ENCODE measurements at regions of chr1 and their contacts with region 1.

Region 1: GRCh38 chr1:192573499-192573898 is 2.1 kb upstream of the RGS1 start:
- DNase-seq: no peak
- H3K4me3 Mint-ChIP-seq: no peak overlapping the region
- H3K27ac Mint-ChIP-seq: no peak overlapping the region
- H3K4me1 Mint-ChIP-seq: peaks cover 79% of the 10 kb centered on the region
- H3K27me3 Mint-ChIP-seq: no peaks in the 10 kb centered on the region

Region 2: DNA sequence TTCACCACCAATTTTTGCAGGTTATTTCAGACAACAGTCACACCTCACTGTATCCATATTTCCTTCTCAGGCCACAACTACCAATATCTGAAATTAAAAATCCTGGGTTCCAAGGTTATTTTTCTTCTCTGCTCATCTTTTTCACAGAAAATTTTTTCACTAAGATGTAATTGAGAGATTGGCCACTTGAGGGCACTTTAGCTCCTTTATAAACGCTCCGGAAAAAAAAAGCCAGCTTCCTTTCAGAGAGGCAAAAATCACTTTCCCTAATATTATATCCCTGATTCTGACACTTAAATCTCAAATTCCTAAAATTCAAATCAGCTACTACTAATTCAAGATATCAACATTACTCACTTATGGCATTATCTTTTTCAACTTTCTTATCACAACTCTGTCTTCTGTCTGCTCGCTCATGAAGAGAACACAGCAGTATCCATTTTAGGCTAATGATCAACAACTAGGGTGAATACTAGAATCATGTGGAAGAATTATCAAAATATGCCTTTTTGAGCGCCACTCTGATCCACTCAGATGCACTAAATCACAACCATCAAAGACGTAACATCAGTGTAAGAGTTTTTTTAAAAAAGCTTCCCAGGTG is 99.3 kb before region 1 on chr1:
- CTCF ChIA-PET with region 1: interaction called, 10 read pairs
- POLR2A ChIA-PET with region 1: no interaction called
- DNase-seq: peak; percentile 18
- H3K4me3 Mint-ChIP-seq: no peak overlapping the region
- H3K27ac Mint-ChIP-seq: no peak overlapping the region
- H3K4me1 Mint-ChIP-seq: no peaks in the 10 kb centered on the region
- H3K27me3 Mint-ChIP-seq: peaks cover 14% of the 10 kb centered on the region

Region 3: GRCh38 chr1:192496371-192497056 is 77.0 kb before region 1 on chr1:
- CTCF ChIA-PET with region 1: no interaction called
- POLR2A ChIA-PET with region 1: no interaction called
- DNase-seq: no peak
- H3K4me3 Mint-ChIP-seq: no peak overlapping the region
- H3K27ac Mint-ChIP-seq: no peak overlapping the region
- H3K4me1 Mint-ChIP-seq: peaks cover 2% of the 10 kb centered on the region
- H3K27me3 Mint-ChIP-seq: no peaks in the 10 kb centered on the region

Region 4: GRCh38 chr1:192550922-192551534 is 22.5 kb before region 1 on chr1:
- CTCF ChIA-PET with region 1: interaction called, 13 read pairs
- POLR2A ChIA-PET with region 1: no interaction called
- DNase-seq: no peak
- H3K4me3 Mint-ChIP-seq: no peak overlapping the region
- H3K27ac Mint-ChIP-seq: peak overlapping the region; percentile 17
- H3K4me1 Mint-ChIP-seq: peaks cover 40% of the 10 kb centered on the region
- H3K27me3 Mint-ChIP-seq: no peaks in the 10 kb centered on the region

Measured in activated CD4-positive, alpha-beta T cell treated with anti-CD3 and anti-CD28 coated beads, Interleukin-2, amount 10 ng/mL, durations not matched to agents 7 days and 5 days (primary cell).